Head of caudate nucleus (tissue), 42 donors: ENCODE measurements at regions of chr3 and their contacts with region 1.

Region 1: GRCh38 chr3:51941798-51942602 is at the starts of genes PARP3 and RRP9:
- DNase-seq: peak; percentile 99 to 100 (median 100)

Region 2: GRCh38 chr3:51974963-51975851 is 33.2 kb after region 1 on chr3 and contains the start of gene ABHD14A:
- intact Hi-C with region 1: loop called (anchors 2 kb)
- DNase-seq: peak in 40 of 42 donors; percentile 63 to 87 (median 76)

Region 3: DNA sequence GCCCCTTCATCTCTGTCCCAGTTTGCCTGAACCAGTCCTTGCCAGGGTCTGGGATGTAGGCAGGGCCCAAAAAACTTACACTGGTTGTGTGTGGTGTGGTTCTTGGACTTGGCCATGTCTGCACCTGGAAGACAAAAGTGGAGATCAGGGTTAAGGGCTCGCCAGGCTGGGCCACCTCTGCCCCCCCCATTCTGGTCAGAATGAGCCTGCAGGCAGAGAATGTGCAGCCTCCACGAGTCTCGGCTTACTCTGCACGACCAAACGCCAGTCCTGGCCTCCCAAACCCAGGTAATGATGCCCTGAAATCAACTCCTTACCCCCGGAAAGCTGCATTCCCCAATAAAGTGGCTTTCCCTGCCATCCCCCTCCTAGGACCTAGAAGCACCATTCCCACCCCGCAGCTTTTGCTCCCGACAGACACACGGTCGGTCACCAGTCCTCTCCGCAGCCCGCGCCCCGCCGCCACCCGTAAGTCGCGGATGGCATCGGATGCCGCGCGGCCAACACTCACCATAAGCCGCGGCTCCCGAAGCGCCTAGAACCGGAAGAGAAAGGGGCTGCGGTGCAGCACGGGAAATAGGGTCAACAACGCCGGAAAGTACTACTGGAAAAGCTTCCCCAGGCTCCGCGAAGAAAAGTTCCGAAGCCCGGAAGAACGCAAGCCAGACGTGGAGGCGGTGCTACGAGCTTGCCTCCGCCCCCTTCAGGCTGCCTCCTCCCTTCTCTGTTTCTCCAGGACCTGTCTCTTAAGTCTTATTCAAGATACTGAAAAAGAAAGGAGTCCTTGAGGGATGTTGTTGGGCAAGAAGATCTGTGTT is 53.6 kb after region 1 on chr3 and contains the start of gene RPL29:
- intact Hi-C with region 1: loop called (anchors 5 kb)
- DNase-seq: peak; percentile 82 to 97 (median 92)

Region 4: GRCh38 chr3:52154117-52155094 is 212.4 kb after region 1 on chr3 and contains the start of gene POC1A:
- intact Hi-C with region 1: loop called (anchors 5 kb)
- DNase-seq: peak; percentile 89 to 99 (median 95)